CD14-positive monocyte (primary cell): ENCODE measurements at regions of chr7 and their contacts with region 1.

Region 1: GRCh38 chr7:118153551-118154177 is 30.3 kb upstream of the LSM8 start:
- DNase-seq: peak; percentile 18 to 53 (median 29)
- H3K4me3 ChIP-seq: no peak overlapping the region
- H3K4me3 Mint-ChIP-seq: no peak overlapping the region
- H3K27ac ChIP-seq: no peak overlapping the region
- H3K27ac Mint-ChIP-seq: no peak overlapping the region
- H3K4me1 ChIP-seq: no peaks in the 10 kb centered on the region
- H3K4me1 Mint-ChIP-seq: no peaks in the 10 kb centered on the region
- H3K27me3 ChIP-seq: peaks cover 2 to 3% of the 10 kb centered on the region in 2 donors
- H3K27me3 Mint-ChIP-seq: peaks cover 10 to 18% (median 10%) of the 10 kb centered on the region in 3 donors
- CTCF ChIP-seq: peak; percentile 88

Region 2: GRCh38 chr7:117741962-117742361 is 411.7 kb before region 1 on chr7:
- intact Hi-C with region 1: loop called in 1 of 2 experiments (anchors 10 kb)
- DNase-seq: no peak
- H3K4me3 ChIP-seq: no peak overlapping the region
- H3K4me3 Mint-ChIP-seq: no peak overlapping the region
- H3K27ac ChIP-seq: no peak overlapping the region
- H3K27ac Mint-ChIP-seq: no peak overlapping the region
- H3K4me1 ChIP-seq: no peaks in the 10 kb centered on the region
- H3K4me1 Mint-ChIP-seq: no peaks in the 10 kb centered on the region
- H3K27me3 ChIP-seq: no peaks in the 10 kb centered on the region
- H3K27me3 Mint-ChIP-seq: peaks cover 0 to 9% (median 6%) of the 10 kb centered on the region in 3 donors
- CTCF ChIP-seq: no peak